H1 (cell line): ENCODE measurements at regions of chr1 and their contacts with region 1.

Region 1: DNA sequence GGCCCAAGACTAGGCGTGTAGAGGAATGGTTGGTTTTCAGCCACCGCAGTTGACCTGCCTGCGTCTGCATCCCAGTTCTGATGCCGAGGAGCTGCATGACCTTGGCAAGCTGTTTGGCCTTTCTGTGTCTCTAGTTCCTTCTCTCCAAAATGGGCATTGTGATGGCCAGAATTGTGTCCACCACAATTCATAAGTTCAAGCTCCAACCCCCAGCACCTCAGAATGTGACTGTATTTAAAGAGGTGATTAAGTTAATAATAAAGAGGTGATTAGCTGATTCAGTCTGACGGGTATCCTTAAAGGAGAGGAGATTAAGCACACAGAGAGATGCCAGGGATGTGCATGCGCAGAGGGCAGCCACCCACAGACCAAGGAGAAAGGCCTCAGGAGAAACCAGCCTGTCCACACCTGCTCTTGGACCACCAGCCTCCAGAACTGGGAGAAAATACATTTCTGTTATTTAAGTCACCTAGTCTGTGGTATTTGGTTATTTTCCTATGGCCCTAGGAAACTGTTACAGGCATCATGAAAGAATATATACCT is 28.5 kb downstream of the MAB21L3 start:
- DNase-seq: no peak
- H3K4me3 ChIP-seq: no peak overlapping the region
- H3K27ac ChIP-seq: no peak overlapping the region
- H3K4me1 ChIP-seq: no peaks in the 10 kb centered on the region
- H3K27me3 ChIP-seq: no peaks in the 10 kb centered on the region
- CTCF ChIP-seq: no peak
- EP300 ChIP-seq: no peak
- POLR2A ChIP-seq: no peak
- RAD21 ChIP-seq: no peak

Region 2: DNA sequence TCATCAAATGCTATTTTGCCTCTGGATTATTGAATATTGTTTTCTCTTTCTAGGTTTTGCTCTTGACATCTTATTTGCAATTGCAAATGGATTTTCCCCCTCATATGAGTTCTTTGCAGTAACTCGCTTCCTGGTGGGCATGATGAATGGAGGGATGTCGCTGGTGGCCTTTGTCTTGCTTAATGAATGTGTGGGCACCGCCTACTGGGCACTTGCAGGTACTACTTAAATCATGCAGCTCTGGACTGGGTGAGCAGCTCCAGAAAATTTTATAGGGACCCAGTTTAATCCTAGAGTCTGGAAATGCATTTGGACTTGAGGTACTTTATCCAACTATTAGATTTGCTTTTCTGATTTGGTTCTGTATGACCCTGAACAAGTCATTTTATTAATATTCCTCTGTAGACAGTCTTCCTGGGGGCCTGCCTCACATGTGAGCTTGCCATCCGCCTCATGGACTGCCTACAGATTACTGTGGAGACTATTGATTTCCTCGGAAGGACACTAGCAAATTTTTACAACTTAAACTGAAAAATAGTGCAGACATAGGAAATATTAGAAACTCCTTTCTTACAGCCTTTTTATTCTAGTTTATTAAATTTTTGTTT is 118.9 kb before region 1 on chr1:
- CTCF ChIA-PET with region 1: no interaction called
- POLR2A ChIA-PET with region 1: no interaction called
- DNase-seq: peak; percentile 33 to 63
- H3K4me3 ChIP-seq: no peak overlapping the region
- H3K27ac ChIP-seq: no peak overlapping the region
- H3K4me1 ChIP-seq: no peaks in the 10 kb centered on the region
- H3K27me3 ChIP-seq: no peaks in the 10 kb centered on the region
- CTCF ChIP-seq: peak; percentile 55 to 79 (median 70)
- EP300 ChIP-seq: no peak
- POLR2A ChIP-seq: no peak
- RAD21 ChIP-seq: peak; percentile 71 to 72; a peak in 3 of 4 replicates

Region 3: DNA sequence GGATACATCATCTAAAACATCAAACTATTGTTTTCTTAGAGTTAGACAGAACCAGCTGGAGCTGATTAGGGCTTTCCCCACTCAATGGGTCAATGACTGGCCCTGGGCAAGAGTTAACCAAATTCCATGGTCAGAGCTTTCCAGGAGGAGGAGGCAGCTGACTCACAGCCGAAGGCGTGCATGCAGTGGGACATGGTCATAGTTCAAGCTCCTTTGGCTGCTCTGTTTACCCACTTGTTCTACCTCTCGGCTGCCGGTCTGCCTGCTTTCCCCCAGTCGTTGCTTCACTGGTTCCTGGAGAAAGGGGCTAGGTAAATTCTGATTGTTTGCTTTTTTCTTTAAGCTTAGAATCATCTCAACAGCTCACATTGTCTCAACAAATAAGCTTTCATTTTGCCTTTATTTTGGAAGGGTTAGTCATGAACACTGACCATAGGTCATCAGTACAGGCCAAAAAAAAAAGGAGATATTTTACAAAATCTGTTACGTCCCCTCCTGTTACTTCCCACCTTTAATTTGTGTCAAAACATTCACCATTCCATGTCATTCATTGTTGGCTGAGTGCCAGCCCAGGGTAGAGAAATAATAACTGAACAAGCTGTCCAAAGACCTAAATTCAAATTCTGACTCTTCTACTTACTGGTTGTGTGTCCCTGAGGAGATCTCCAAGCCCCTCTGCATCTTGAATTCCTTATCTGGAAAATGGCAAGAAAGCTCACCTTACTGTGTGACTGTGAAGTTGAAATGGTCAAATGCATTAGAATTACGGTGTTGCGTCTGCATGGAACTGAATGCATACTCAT is 16.5 kb before region 1 on chr1:
- CTCF ChIA-PET with region 1: interaction called, 36 read pairs
- POLR2A ChIA-PET with region 1: no interaction called
- DNase-seq: no peak
- H3K4me3 ChIP-seq: no peak overlapping the region
- H3K27ac ChIP-seq: no peak overlapping the region
- H3K4me1 ChIP-seq: no peaks in the 10 kb centered on the region
- H3K27me3 ChIP-seq: no peaks in the 10 kb centered on the region
- CTCF ChIP-seq: no peak
- EP300 ChIP-seq: no peak
- POLR2A ChIP-seq: no peak
- RAD21 ChIP-seq: no peak

Region 4: GRCh38 chr1:116168277-116169097 is 28.8 kb after region 1 on chr1:
- CTCF ChIA-PET with region 1: interaction called, 28 read pairs
- POLR2A ChIA-PET with region 1: interaction called, 3 read pairs
- DNase-seq: peak; percentile 36 to 92
- H3K4me3 ChIP-seq: peak overlapping the region; percentile 48 to 63 (median 57)
- H3K27ac ChIP-seq: no peak overlapping the region
- H3K4me1 ChIP-seq: peaks cover 3 to 9% (median 6%) of the 10 kb centered on the region in 4 experiments
- H3K27me3 ChIP-seq: peaks cover 0 to 25% (median 19%) of the 10 kb centered on the region in 4 experiments; a peak in 6 of 7 replicates
- CTCF ChIP-seq: peak; percentile 85 to 89 (median 86)
- EP300 ChIP-seq: peak in 1 of 2 experiments; percentile 54; a peak in 1 of 3 replicates
- POLR2A ChIP-seq: peak in 1 of 2 experiments; percentile 18; a peak in 1 of 3 replicates
- RAD21 ChIP-seq: peak; percentile 62 to 68

Region 5: DNA sequence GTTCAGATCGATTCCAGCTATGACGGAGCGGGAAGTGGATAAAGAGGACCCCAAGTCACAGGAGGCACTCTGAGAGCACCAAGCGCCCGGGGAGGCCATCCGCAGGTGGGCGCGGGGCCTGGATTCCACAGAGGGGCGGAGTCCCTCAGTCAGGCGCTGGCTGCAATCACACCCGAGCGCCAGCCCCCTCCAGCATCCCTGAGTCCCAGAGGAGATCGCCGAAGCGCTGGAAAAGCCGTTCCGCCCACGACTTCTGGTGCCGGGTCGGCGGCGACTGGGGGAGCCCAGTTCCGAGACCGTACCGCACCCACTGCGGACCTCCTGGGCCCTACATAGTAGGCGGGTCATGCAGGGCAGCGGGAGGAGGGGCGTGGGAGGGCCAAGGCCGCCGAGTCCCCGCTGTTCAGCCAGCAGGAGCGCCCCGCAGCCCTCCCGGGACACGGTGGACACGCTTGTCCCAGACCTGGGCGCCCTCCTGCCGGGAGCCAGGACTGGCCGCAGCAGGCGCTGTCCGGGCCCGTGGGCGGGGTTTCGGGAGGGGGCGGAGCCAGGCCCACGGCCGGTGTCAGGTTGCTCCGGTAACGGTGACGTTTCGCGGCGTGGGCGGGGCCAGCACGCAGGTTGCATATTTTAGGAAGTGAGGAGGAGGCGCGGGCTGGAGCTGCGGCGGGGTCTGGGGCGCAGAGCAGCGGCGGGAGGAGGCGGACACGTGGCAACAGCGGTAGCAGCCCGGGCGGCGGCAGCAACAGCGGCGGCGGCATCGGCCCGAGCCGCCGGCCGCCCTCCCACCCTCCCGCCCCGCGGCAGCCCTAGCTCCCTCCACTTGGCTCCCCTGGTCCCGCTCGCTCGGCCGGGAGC is 233.2 kb after region 1 on chr1 and contains the start of gene ATP1A1:
- CTCF ChIA-PET with region 1: interaction called, 18 read pairs
- POLR2A ChIA-PET with region 1: interaction called, 3 read pairs
- DNase-seq: peak; percentile 89 to 99
- H3K4me3 ChIP-seq: peak within 1 kb of the TSS; percentile 84 to 89 (median 86)
- H3K27ac ChIP-seq: peak within 1 kb of the TSS; percentile 92
- H3K4me1 ChIP-seq: peaks cover 3 to 19% (median 17%) of the 10 kb centered on the region in 4 experiments
- H3K27me3 ChIP-seq: no peaks in the 10 kb centered on the region; a peak in 3 of 7 replicates
- CTCF ChIP-seq: no peak
- EP300 ChIP-seq: peak; percentile 7 to 98; a peak in 1 of 3 replicates
- POLR2A ChIP-seq: peak; percentile 95 to 96
- RAD21 ChIP-seq: 0 out of 4 replicates have a peak, but pooled peaks of 1 of the 2 experiments have one; percentile 3
- total RNA-seq, gene ATP1A1: 325 and 326 TPM in 2 replicates

Region 6: GRCh38 chr1:116411784-116412479 is 272.3 kb after region 1 on chr1:
- CTCF ChIA-PET with region 1: interaction called, 20 read pairs
- POLR2A ChIA-PET with region 1: interaction called, 3 read pairs
- DNase-seq: no peak
- H3K4me3 ChIP-seq: no peak overlapping the region
- H3K27ac ChIP-seq: no peak overlapping the region
- H3K4me1 ChIP-seq: peaks cover 0 to 6% (median 4%) of the 10 kb centered on the region in 4 experiments; a peak in 4 of 7 replicates
- H3K27me3 ChIP-seq: no peaks in the 10 kb centered on the region
- CTCF ChIP-seq: no peak
- EP300 ChIP-seq: no peak
- POLR2A ChIP-seq: no peak
- RAD21 ChIP-seq: no peak

Region 7: DNA sequence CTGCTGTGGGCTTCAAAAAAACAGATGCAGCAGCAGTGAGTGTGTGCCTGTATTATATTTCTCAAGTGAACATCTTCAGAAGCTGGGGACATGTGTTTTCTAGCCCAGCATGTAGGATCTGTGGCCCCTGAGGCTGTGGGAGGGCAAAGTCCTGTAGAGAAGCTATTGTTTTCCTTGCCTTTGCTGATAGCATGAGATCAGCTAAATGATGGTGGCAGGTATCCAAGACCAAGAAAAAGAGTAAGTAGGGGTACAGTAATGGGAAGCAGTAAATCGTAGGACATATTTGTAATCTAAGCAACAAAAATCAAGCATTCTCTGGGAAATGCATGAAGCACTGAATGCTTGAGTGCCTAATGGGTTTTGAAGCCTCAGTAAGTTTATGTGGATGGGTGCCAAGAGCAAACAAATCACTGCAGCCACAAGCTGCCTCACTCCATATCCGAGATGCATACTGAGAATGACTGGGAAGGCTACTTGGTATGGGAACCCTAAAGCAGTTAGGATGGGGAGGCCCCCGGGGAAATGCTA is 332.8 kb after region 1 on chr1:
- CTCF ChIA-PET with region 1: interaction called, 13 read pairs
- POLR2A ChIA-PET with region 1: no interaction called
- DNase-seq: no peak
- H3K4me3 ChIP-seq: no peak overlapping the region
- H3K27ac ChIP-seq: no peak overlapping the region
- H3K4me1 ChIP-seq: 0 out of 7 replicates have a peak, but pooled peaks cover 0 to 2% (median 0%) of the 10 kb centered on the region in 4 experiments
- H3K27me3 ChIP-seq: no peaks in the 10 kb centered on the region
- CTCF ChIP-seq: no peak
- EP300 ChIP-seq: no peak
- POLR2A ChIP-seq: no peak
- RAD21 ChIP-seq: no peak

Region 8: DNA sequence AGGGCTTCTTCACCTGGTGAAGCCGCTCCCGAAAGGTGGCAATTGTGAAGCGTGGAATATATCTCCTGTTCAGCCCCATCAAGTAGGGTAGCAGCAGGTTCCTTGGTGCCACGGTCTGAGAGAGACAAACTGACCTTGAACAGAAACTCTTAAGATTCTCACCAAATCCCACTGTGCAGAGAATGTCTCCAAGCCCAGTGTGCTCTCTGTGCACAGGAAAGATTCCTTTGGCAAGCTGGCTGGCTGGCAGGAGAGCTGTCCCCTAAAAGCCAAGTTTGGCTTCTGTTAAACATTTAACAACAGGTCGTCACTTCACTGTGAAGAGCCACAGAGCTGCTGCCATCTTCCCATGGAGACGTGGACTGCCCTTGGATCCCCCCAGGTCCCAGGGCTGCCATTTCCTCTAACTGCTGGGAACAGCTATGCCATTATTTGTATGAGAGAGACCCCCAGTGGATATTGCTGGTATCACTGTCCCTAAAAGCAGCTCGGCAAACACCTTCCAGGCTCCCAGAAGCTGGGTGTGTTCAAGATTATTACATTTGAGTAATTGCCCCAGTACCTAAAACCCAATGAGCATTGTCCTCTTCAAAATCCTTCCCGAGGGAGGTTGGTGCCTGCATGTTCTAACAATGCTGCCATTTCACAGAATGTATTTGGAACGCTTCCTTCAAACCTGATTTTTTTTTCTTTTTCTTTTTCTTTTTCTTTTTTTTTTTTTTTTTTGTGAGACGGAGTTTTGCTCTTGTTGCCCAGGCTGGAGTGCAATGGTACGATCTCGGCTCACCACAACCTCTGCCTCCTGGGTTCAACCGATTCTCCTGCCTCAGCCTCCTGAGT is 359.3 kb after region 1 on chr1:
- CTCF ChIA-PET with region 1: interaction called, 59 read pairs
- POLR2A ChIA-PET with region 1: interaction called, 3 read pairs
- DNase-seq: peak; percentile 34 to 77
- H3K4me3 ChIP-seq: no peak overlapping the region
- H3K27ac ChIP-seq: no peak overlapping the region
- H3K4me1 ChIP-seq: no peaks in the 10 kb centered on the region; a peak in 1 of 7 replicates
- H3K27me3 ChIP-seq: no peaks in the 10 kb centered on the region
- CTCF ChIP-seq: peak; percentile 33 to 81 (median 78)
- EP300 ChIP-seq: no peak
- POLR2A ChIP-seq: no peak
- RAD21 ChIP-seq: peak; percentile 97